Activated CD4-positive, alpha-beta memory T cell treated with anti-CD3 and anti-CD28 coated beads, Interleukin-2, amount 10 ng/mL, durations not matched to agents 7 days and 5 days (primary cell): ENCODE measurements at regions of chr3 and their contacts with region 1.

Region 1: GRCh38 chr3:38205472-38205805 is 40.1 kb downstream of the OXSR1 start:
- DNase-seq: no peak
- H3K4me3 Mint-ChIP-seq: no peak overlapping the region
- H3K27ac Mint-ChIP-seq: peak overlapping the region; percentile 59
- H3K4me1 Mint-ChIP-seq: peaks cover 69% of the 10 kb centered on the region
- H3K27me3 Mint-ChIP-seq: no peaks in the 10 kb centered on the region

Region 2: GRCh38 chr3:38190481-38190881 is 15.0 kb before region 1 on chr3:
- CTCF ChIA-PET with region 1: interaction called, 4 read pairs
- POLR2A ChIA-PET with region 1: interaction called, 10 read pairs
- DNase-seq: no peak
- H3K4me3 Mint-ChIP-seq: no peak overlapping the region
- H3K27ac Mint-ChIP-seq: peak overlapping the region; percentile 24
- H3K4me1 Mint-ChIP-seq: peaks cover 9% of the 10 kb centered on the region
- H3K27me3 Mint-ChIP-seq: no peaks in the 10 kb centered on the region